IMR-90 (cell line): ENCODE measurements at regions of chr17 and their contacts with region 1.

Region 1: DNA sequence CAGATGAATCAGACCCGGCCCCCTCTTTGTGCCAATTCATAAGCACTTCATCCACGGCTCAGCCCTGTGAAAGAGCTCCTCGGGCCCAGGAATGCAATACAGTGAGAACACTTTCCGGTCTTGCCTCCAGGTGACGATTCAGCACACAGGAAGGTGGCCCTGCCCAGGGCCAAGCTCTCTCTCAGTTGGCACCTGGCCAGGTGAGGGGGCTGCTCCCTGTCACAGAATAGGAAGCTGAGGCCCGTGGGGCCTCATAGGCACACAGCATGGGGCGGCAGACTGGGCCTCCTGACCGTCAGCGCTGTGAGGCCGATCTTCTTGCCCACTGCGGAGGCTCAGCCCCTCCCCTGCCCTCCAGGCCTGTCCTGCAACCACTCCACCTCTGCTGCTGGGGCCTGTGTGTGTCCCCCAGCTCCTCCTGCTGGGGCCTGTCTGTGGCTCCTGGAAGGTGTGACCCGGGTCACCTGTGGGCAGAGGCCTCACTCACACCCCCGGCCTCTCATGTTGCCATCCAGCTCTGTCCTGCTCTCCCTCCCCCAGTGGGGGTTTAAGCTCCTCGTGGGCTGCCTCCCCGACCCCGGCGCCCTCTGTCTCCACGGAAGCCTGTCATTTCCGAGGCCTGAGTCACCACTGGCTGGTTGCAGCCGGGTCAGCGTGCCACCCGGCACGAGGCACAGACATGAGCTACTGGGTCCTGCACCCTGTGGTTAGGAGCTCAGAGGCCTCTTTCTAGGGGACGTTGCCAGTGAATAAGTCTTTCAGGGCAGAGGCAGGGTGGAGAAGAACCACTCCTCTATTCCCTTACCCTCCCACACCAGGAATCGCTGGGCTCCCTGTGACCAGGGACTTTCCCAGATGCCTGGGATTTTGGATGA is 114.4 kb downstream of the SEC14L1 start:
- DNase-seq: peak; percentile 86
- ATAC-seq: peak; percentile 66
- H3K4me3 ChIP-seq: no peak overlapping the region
- H3K27ac ChIP-seq: peak overlapping the region; percentile 48
- H3K4me1 ChIP-seq: peaks cover 29% of the 10 kb centered on the region
- H3K27me3 ChIP-seq: no peaks in the 10 kb centered on the region
- CTCF ChIP-seq: no peak
- POLR2A ChIP-seq: no peak; the same call in 1 of the 2 replicates
- RAD21 ChIP-seq: no peak

Region 2: DNA sequence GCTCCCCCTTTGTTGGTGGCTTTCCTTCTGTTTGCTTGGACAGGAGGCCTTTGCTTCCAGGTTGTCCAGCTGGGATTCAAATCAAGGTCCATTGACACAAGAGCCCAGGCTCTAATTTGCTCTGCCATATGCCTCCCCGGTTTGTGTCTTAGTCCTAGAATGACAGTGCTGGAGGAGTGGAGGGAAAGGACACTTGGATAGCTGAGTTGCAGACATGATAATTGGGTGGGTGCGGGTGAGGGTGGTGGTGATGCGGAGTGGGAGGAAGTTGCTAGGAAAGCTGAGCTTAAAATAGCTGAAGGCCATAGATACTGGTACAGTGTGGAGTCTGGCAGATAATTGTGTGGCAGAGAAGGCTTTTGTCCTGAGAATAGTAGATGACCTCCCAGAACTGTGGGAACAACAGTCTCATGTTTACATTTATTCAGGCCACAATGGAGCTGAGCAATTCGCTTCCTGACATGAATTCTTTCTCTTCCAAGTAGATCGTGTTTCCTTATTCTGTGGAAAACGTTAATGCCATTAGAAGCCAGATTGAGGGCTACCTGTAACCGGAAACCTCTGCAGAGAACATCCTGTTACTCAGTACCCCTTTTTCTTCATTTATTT is 90.6 kb before region 1 on chr17:
- CTCF ChIA-PET with region 1: no interaction called
- POLR2A ChIA-PET with region 1: no interaction called
- dilution Hi-C with region 1: no loop called
- in situ Hi-C with region 1: no loop called
- intact Hi-C with region 1: no loop called
- DNase-seq: peak; percentile 53
- ATAC-seq: peak; percentile 55
- H3K4me3 ChIP-seq: no peak overlapping the region
- H3K27ac ChIP-seq: peak overlapping the region; percentile 25; the same call in 1 of the 2 replicates
- H3K4me1 ChIP-seq: peaks cover 17% of the 10 kb centered on the region
- H3K27me3 ChIP-seq: no peaks in the 10 kb centered on the region
- CTCF ChIP-seq: no peak
- POLR2A ChIP-seq: no peak
- RAD21 ChIP-seq: no peak

Region 3: GRCh38 chr17:77285520-77286390 is 30.6 kb after region 1 on chr17:
- CTCF ChIA-PET with region 1: no interaction called
- POLR2A ChIA-PET with region 1: interaction called, 4 read pairs
- dilution Hi-C with region 1: no loop called
- in situ Hi-C with region 1: no loop called
- intact Hi-C with region 1: loop called (anchors 2 kb)
- DNase-seq: peak; percentile 89
- ATAC-seq: peak; percentile 66
- H3K4me3 ChIP-seq: no peak overlapping the region
- H3K27ac ChIP-seq: peak overlapping the region; percentile 93
- H3K4me1 ChIP-seq: peaks cover 45% of the 10 kb centered on the region
- H3K27me3 ChIP-seq: no peaks in the 10 kb centered on the region
- CTCF ChIP-seq: no peak
- POLR2A ChIP-seq: no peak; the same call in 1 of the 2 replicates
- RAD21 ChIP-seq: peak; percentile 13